SK-N-SH (cell line): ENCODE measurements at regions of chr22 and their contacts with region 1.

Region 1: DNA sequence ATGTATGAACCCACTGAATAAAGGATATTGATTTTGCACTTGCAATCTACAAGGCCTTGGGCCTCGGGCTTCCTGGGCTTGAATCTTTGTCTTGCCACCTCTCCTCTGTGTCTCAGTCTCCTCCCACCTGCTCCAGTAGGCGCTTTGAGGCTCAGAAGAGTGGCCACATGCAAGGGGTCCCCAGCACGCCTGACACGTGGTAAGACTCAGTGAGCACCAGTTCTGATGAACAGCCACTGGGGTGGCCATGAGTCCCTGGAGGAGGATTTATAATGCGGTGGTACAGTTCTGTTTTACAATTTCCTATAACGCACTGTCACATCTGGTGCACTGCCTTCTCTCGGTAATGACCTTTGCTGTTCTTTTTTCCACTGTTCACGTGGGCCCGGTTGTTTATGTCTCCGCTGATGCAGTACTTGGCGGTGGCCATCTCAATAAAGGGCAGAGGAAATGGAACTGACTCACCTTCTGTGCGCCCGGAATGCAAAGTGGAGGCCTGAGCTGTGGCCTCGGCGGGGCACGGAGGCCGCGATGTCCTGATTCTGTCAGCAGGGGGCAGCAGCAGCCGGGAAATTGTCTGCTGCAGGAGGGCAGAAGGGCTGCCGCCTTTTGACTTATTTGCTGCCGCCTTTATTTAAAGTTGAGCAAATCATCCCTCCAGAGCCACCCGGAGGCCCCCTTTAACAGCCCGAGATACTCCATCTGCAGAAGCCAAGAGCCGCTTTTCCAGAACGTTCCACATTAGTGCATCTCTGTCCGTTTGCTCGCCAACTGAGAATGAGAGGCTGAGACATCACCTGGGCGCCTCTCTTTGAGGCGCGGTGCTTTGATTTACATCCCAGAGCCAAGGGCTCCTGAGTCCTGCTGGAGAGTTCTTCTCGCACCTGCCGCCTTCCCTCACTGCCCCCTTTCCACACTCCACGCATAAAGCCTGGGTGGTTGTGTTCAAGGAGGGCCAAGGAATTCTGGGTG is 6.0 kb upstream of the IFT27 start:
- DNase-seq: peak; percentile 86
- H3K4me3 ChIP-seq: peak overlapping the region in 1 of 2 experiments; percentile 30; a peak in 1 of 4 replicates
- H3K27ac ChIP-seq: peak overlapping the region in 1 of 2 experiments; percentile 4; a peak in 1 of 4 replicates
- H3K4me1 ChIP-seq: peaks cover 0 to 2% of the 10 kb centered on the region in 2 experiments; a peak in 1 of 4 replicates
- H3K27me3 ChIP-seq: peaks cover 17% of the 10 kb centered on the region; the same call in 1 of the 2 replicates
- CTCF ChIP-seq: peak; percentile 93
- EP300 ChIP-seq: no peak
- RAD21 ChIP-seq: peak; percentile 87

Region 2: DNA sequence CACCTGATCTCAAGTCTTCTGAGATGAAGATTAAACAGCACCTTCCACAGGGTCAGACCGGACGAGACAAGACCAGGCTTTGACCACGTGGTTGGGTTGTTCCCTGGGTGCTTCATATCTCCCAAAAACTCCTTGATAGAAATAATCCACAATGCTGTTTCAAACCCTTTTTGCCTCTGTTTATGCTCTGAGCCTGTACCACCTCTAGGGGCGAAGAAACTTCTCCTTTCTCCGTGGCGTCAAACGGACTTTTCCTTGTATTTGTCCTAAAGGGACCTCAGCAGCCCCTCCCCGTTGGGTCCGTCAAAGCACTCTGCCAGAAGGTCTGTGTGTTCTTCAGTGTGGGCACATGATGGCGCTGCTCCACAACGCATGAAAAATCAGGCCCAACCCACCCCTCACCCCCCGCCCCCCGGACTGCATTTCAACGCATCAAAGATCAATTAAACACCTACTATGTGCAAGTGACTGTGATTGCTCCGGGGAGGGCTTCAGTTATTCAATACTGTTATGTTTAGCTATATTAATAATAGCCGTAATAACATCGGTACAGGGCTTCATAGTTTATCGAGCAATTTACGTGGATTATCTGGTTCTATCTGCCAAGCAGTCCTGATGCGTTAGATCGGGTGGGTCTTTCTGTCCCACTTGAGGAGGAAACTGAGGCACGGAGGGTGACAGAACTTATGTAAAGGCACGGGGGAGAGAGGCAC is 235.7 kb before region 1 on chr22:
- CTCF ChIA-PET with region 1: interaction called, 55 read pairs
- POLR2A ChIA-PET with region 1: no interaction called
- DNase-seq: peak; percentile 86
- H3K4me3 ChIP-seq: no peak overlapping the region
- H3K27ac ChIP-seq: no peak overlapping the region
- H3K4me1 ChIP-seq: peaks cover 2% of the 10 kb centered on the region in 2 experiments; a peak in 1 of 4 replicates
- H3K27me3 ChIP-seq: peaks cover 9% of the 10 kb centered on the region
- CTCF ChIP-seq: peak; percentile 65
- EP300 ChIP-seq: no peak
- RAD21 ChIP-seq: peak; percentile 84

Region 3: DNA sequence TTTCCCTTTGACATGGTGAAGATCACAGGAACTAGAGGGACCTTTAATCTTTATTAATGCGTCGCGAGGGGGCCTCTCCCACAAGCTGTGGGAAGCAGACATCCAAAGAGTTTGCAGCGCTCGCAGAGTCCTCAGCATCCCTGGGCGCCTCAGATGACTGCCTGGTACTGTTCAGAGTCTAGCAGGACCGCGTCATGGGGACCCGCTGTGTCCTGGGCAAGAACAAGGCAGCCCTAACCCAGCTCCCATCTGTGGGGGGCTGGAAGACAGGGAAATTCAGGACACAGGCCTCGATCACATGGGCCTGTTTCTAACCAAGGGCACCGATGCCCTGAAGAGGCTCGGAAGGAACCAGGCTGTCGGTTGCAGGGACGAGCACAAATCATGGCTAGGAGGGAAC is 118.4 kb before region 1 on chr22:
- CTCF ChIA-PET with region 1: no interaction called
- POLR2A ChIA-PET with region 1: no interaction called
- DNase-seq: no peak
- H3K4me3 ChIP-seq: no peak overlapping the region
- H3K27ac ChIP-seq: no peak overlapping the region
- H3K4me1 ChIP-seq: peaks cover 16% of the 10 kb centered on the region in 2 experiments
- H3K27me3 ChIP-seq: peaks cover 24% of the 10 kb centered on the region; the same call in 1 of the 2 replicates
- CTCF ChIP-seq: no peak
- EP300 ChIP-seq: no peak
- RAD21 ChIP-seq: no peak

Region 4: DNA sequence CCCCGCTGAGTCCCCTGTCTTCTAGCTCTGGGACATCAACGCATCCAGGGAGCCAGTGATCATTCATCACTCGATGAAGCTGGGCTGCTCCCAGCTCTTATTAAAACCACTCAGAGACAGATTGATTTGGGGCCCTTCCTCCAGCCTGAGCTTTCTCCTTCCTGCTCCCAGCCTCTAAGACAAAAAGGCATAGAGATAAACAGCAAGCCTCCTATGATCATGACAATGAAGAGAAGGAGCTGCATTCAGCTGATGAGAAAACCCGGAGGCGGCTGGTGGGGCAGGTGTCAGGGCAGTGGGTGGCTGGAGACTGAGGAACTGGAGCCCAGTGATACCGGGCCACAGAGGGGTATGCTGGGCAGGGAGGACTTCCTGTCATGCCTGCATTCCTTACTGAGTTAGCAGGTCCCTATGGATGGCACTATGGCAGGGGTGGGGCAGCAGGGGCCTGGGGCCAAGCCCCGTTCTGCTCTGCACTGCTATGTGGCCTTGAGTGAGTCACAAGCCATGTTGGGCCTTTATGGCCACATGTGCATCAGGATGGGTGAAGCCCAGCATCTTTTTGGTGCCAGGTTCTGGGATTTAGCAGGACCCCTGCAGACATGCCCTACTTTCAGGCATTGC is 14.7 kb after region 1 on chr22:
- CTCF ChIA-PET with region 1: interaction called, 19 read pairs
- POLR2A ChIA-PET with region 1: no interaction called
- DNase-seq: no peak
- H3K4me3 ChIP-seq: no peak overlapping the region
- H3K27ac ChIP-seq: no peak overlapping the region
- H3K4me1 ChIP-seq: no peaks in the 10 kb centered on the region
- H3K27me3 ChIP-seq: peaks cover 5% of the 10 kb centered on the region
- CTCF ChIP-seq: no peak
- EP300 ChIP-seq: no peak
- RAD21 ChIP-seq: no peak

Region 5: DNA sequence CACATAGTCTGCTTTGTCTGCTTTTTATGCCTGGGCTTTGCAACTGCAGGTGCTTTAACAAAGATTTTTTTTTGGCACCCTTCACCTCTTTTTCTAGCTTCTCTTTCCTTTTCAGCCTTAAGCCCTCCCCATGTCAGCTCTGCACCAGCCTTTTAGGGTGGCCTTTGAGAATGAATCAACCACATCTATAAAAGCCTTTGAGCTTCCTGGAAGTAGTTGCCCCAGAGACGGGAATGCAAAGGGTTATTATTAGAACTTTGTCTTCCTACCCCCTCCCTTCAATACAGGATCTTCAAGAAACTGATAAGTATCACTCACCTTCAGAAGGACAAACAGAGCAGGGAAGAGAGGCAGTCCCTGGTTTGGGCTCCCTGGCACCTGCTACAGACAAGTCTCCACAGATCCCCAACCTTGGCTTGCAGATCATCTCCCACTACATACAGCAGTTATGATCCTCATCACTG is 26.9 kb after region 1 on chr22:
- CTCF ChIA-PET with region 1: interaction called, 11 read pairs
- POLR2A ChIA-PET with region 1: no interaction called
- DNase-seq: no peak
- H3K4me3 ChIP-seq: no peak overlapping the region
- H3K27ac ChIP-seq: no peak overlapping the region
- H3K4me1 ChIP-seq: no peaks in the 10 kb centered on the region
- H3K27me3 ChIP-seq: peaks cover 48% of the 10 kb centered on the region
- CTCF ChIP-seq: no peak
- EP300 ChIP-seq: no peak
- RAD21 ChIP-seq: no peak

Region 6: DNA sequence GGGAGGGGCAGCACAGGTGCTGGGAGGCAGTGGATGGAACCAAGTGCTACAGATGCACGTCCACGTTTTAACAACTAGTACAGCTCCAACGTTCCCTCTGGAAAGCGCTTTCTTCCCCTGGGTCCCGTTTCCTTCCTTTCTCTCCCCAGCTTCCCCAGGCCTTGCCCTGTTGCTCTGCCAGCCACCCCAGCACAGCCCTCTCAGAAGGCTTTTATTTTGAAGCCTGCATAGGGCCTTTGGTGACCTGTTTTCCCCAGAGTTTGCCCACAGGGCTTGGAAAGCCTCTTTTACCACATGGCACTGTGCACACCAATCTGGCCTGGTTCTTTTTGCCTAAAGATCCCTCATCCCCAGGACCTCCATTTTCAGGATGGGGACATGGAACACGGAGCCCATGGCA is 65.0 kb after region 1 on chr22:
- CTCF ChIA-PET with region 1: interaction called, 16 read pairs
- POLR2A ChIA-PET with region 1: no interaction called
- DNase-seq: no peak
- H3K4me3 ChIP-seq: no peak overlapping the region
- H3K27ac ChIP-seq: no peak overlapping the region
- H3K4me1 ChIP-seq: peaks cover 0 to 7% of the 10 kb centered on the region in 2 experiments; a peak in 1 of 4 replicates
- H3K27me3 ChIP-seq: peaks cover 37% of the 10 kb centered on the region
- CTCF ChIP-seq: no peak
- EP300 ChIP-seq: no peak
- RAD21 ChIP-seq: no peak

Region 7: DNA sequence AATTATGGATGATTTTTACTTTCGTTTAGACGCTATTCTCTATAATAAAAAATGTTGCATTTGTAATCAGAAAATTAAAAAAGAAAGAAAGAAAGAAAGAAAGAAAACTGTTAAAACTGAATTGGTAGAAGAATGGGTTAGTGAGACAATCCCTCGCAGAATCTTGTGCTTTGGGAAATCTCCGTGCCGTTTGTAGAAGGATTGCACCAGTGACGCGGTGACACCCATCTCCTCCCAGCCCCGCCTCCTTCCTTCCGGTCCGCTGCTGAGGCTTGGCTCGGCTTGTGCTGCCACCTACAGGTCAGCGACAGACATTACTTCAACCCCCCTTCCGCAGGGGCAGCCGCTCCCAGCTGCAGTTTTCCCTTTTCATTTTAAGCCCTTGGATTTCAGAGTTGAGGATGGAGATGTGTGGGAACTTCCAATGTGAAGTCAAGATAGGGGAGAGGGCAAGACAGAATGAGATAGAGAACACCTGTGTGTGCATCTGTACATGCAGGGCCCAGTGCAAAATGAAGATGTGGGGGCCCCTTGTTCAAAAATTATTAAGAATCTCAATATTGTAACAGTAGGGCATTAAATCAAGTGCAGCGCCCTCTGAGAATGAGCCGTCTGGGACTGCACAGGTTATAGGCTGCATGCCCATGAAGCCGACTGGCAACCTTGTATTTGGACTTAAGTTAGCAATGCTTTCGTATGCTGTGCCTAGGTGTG is 196.2 kb after region 1 on chr22:
- CTCF ChIA-PET with region 1: interaction called, 57 read pairs
- POLR2A ChIA-PET with region 1: no interaction called
- DNase-seq: peak; percentile 96
- H3K4me3 ChIP-seq: peak overlapping the region; percentile 45 to 61
- H3K27ac ChIP-seq: no peak overlapping the region
- H3K4me1 ChIP-seq: no peaks in the 10 kb centered on the region; a peak in 1 of 4 replicates
- H3K27me3 ChIP-seq: no peaks in the 10 kb centered on the region; the same call in 1 of the 2 replicates
- CTCF ChIP-seq: peak; percentile 91
- EP300 ChIP-seq: no peak
- RAD21 ChIP-seq: peak; percentile 94

Region 8: GRCh38 chr22:37043828-37044538 is 262.0 kb after region 1 on chr22:
- CTCF ChIA-PET with region 1: interaction called, 11 read pairs
- POLR2A ChIA-PET with region 1: no interaction called
- DNase-seq: peak; percentile 70
- H3K4me3 ChIP-seq: no peak overlapping the region
- H3K27ac ChIP-seq: no peak overlapping the region
- H3K4me1 ChIP-seq: peaks cover 0 to 14% of the 10 kb centered on the region in 2 experiments; a peak in 1 of 4 replicates
- H3K27me3 ChIP-seq: no peaks in the 10 kb centered on the region
- CTCF ChIP-seq: peak; percentile 46
- EP300 ChIP-seq: no peak
- RAD21 ChIP-seq: no peak